Upper lobe of right lung (tissue), 1 donor: ENCODE measurements at regions of chr2 and their contacts with region 1.

Region 1: GRCh38 chr2:205885492-205886099 is 200.4 kb downstream of the INO80D start:
- DNase-seq: peak; percentile 93
- ATAC-seq: peak; percentile 98
- H3K4me3 ChIP-seq: no peak overlapping the region
- H3K27ac ChIP-seq: no peak overlapping the region
- H3K4me1 ChIP-seq: no peaks in the 10 kb centered on the region
- H3K27me3 ChIP-seq: no peaks in the 10 kb centered on the region
- CTCF ChIP-seq: peak; percentile 90

Region 2: DNA sequence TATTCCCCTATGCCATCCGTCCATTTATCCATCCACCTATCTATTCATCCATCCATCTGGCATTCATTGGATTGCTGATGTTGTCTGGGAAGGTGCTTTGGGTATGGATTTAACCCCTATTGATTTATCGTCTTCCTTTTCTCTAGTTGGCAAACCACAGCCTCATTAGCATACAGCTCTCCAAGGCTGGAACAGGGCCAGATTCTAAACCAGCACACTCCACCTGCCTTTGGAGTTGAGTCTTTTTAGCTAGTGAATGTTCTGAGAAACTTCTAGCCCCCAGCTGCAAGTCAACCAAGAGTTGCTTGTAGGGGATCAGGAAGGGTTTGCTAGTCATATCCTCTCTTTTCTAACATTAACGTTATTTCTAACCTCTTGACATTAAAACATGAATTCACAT is 112.6 kb before region 1 on chr2:
- intact Hi-C with region 1: loop called (anchors 5 kb)
- DNase-seq: no peak
- ATAC-seq: no peak
- H3K4me3 ChIP-seq: no peak overlapping the region
- H3K27ac ChIP-seq: no peak overlapping the region
- H3K4me1 ChIP-seq: peaks cover 26% of the 10 kb centered on the region
- H3K27me3 ChIP-seq: no peaks in the 10 kb centered on the region
- CTCF ChIP-seq: no peak

Region 3: DNA sequence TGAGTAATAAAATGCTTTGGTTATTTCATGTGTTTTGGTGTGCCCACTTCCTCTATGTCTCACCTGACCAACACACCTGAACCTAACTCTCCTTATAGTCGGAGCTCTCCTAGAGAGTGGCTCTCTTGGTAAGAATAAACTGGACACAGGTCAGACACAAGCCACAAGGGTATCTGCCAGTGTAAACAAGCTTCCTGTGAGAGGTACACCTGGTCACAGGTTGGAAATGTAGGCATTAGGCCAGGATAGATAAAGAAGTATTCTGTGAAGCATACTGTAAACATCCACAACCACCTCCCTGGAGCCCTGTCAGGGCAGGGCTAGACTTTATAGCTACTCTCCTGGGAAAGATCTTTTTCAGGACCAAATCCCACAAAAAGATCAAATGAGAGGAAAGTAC is 458.2 kb after region 1 on chr2:
- intact Hi-C with region 1: no loop called
- DNase-seq: no peak
- ATAC-seq: no peak
- H3K4me3 ChIP-seq: no peak overlapping the region
- H3K27ac ChIP-seq: no peak overlapping the region
- H3K4me1 ChIP-seq: peaks cover 3% of the 10 kb centered on the region
- H3K27me3 ChIP-seq: no peaks in the 10 kb centered on the region
- CTCF ChIP-seq: no peak